Naive thymus-derived CD4-positive, alpha-beta T cell (primary cell): ENCODE measurements at regions of chr12 and their contacts with region 1.

Region 1: DNA sequence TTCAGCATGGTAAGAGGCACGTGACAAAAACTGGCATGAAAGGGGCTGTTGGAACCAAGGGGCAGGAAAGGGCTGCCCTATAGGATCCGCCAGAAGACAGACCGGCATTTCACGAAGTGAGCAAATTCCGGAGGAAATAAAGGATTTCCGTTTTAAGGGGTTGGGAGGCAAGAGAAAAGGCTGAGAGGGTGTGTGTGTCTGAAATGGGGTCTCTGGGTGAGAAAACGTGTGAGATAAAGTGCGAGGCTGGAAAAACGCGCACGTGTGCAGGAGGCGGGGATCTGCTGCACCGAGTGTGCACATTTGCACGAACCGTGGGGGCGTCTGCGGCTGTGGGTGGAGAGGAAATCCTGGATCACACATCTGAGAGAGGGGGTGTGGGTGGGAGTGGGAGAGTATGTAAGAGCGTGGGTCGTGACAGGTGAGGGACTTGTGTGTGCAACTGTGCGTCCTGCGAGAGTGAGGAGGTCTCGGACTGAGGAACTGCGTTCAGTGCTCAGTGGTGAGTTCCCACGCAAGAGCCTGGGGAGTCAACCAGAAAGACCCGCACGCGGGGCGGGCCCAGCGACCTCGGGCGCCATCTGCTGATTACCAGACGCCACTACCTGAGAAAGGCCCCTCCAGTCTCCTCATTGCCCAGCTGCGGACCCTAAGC is 37.0 kb upstream of the P2RX7 start:
- DNase-seq: peak; percentile 60 to 81 (median 70)
- ATAC-seq: peak; percentile 91
- H3K4me3 ChIP-seq: peak overlapping the region; percentile 66
- H3K4me3 Mint-ChIP-seq: peak overlapping the region; percentile 81 to 95 (median 87)
- H3K27ac ChIP-seq: no peak overlapping the region
- H3K27ac Mint-ChIP-seq: peak overlapping the region in 6 of 9 donors; percentile 41 to 88 (median 69)
- H3K4me1 ChIP-seq: peaks cover 34 to 42% of the 10 kb centered on the region in 2 donors
- H3K4me1 Mint-ChIP-seq: peaks cover 28 to 56% (median 52%) of the 10 kb centered on the region in 7 donors
- H3K27me3 ChIP-seq: no peaks in the 10 kb centered on the region
- H3K27me3 Mint-ChIP-seq: peaks cover 0 to 22% (median 4%) of the 10 kb centered on the region in 5 donors

Region 2: GRCh38 chr12:120856980-120857379 is 238.7 kb before region 1 on chr12:
- CTCF ChIA-PET with region 1: no interaction called
- POLR2A ChIA-PET with region 1: no interaction called
- intact Hi-C with region 1: loop called in 1 of 2 experiments (anchors 10 kb)
- DNase-seq: peak in 1 of 9 donors; percentile 10
- ATAC-seq: peak; percentile 46
- H3K4me3 ChIP-seq: no peak overlapping the region
- H3K4me3 Mint-ChIP-seq: peak overlapping the region in 9 of 10 donors; percentile 3 to 81 (median 71)
- H3K27ac ChIP-seq: no peak overlapping the region
- H3K27ac Mint-ChIP-seq: peak overlapping the region in 5 of 9 donors; percentile 3 to 83 (median 59)
- H3K4me1 ChIP-seq: peaks cover 15 to 25% of the 10 kb centered on the region in 2 donors
- H3K4me1 Mint-ChIP-seq: peaks cover 35 to 71% (median 58%) of the 10 kb centered on the region in 7 donors
- H3K27me3 ChIP-seq: no peaks in the 10 kb centered on the region
- H3K27me3 Mint-ChIP-seq: no peaks in the 10 kb centered on the region

Region 3: GRCh38 chr12:121005346-121005815 is 90.3 kb before region 1 on chr12:
- CTCF ChIA-PET with region 1: no interaction called
- POLR2A ChIA-PET with region 1: no interaction called
- intact Hi-C with region 1: loop called in 1 of 2 experiments (anchors 1 kb)
- DNase-seq: peak in 6 of 9 donors; percentile 17 to 49 (median 19)
- ATAC-seq: peak; percentile 54
- H3K4me3 ChIP-seq: no peak overlapping the region
- H3K4me3 Mint-ChIP-seq: no peak overlapping the region
- H3K27ac ChIP-seq: no peak overlapping the region
- H3K27ac Mint-ChIP-seq: peak overlapping the region in 3 of 9 donors; percentile 8 to 65 (median 30)
- H3K4me1 ChIP-seq: no peaks in the 10 kb centered on the region
- H3K4me1 Mint-ChIP-seq: peaks cover 0 to 5% (median 0%) of the 10 kb centered on the region in 7 donors
- H3K27me3 ChIP-seq: no peaks in the 10 kb centered on the region
- H3K27me3 Mint-ChIP-seq: no peaks in the 10 kb centered on the region

Region 4: DNA sequence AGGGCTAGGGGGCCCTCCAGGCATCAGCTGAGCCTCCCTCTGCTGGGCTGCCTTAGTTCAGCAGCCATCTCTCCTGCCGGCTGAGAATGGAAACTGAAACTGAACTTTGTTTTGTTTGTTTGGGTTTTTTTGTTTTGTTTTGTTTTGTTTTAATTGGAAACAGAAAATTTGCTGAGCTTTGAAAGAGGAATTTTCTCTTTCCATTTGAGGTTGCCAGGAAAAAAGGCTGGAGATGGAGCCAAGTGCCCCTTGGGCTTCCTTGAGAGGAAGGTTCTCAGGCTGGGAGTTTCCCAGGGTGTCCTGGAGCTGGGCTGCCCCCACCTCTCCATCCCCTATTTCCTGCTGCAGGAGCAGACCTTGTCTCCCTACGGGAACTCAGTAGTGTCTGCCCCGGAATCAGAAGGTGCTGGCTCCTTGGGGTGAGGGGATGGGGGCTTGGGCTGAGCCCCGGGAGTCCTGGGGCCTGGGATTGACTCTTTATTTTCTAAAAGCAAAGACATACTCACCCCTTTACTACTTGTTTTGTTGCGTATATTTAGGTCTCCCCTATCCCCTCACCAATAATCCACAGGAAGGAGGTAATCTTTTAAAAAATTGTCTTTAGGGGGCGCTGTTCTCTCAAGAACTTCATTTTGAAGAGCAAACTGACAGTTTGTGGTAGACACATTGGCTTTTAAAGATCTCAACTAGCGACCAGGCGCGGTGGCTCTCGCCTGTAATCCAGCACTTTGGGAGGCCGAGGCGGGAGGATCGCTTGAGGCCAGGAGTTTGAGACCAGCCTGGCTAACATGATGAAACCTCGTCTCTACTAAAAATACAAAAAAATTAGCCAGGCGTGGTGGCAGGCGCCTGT is 35.3 kb before region 1 on chr12:
- CTCF ChIA-PET with region 1: interaction called, 71 read pairs
- POLR2A ChIA-PET with region 1: interaction called, 4 read pairs
- intact Hi-C with region 1: loop called (anchors 1 kb)
- DNase-seq: peak; percentile 28 to 78 (median 67)
- ATAC-seq: peak; percentile 97
- H3K4me3 ChIP-seq: peak overlapping the region; percentile 74
- H3K4me3 Mint-ChIP-seq: peak overlapping the region; percentile 73 to 91 (median 85)
- H3K27ac ChIP-seq: peak overlapping the region; percentile 56
- H3K27ac Mint-ChIP-seq: peak overlapping the region; percentile 75 to 98 (median 91)
- H3K4me1 ChIP-seq: peaks cover 7 to 11% of the 10 kb centered on the region in 2 donors
- H3K4me1 Mint-ChIP-seq: peaks cover 9 to 31% (median 17%) of the 10 kb centered on the region in 7 donors
- H3K27me3 ChIP-seq: no peaks in the 10 kb centered on the region
- H3K27me3 Mint-ChIP-seq: no peaks in the 10 kb centered on the region